CD4-positive, alpha-beta T cell (primary cell): ENCODE measurements at regions of chr3 and their contacts with region 1.

Region 1: DNA sequence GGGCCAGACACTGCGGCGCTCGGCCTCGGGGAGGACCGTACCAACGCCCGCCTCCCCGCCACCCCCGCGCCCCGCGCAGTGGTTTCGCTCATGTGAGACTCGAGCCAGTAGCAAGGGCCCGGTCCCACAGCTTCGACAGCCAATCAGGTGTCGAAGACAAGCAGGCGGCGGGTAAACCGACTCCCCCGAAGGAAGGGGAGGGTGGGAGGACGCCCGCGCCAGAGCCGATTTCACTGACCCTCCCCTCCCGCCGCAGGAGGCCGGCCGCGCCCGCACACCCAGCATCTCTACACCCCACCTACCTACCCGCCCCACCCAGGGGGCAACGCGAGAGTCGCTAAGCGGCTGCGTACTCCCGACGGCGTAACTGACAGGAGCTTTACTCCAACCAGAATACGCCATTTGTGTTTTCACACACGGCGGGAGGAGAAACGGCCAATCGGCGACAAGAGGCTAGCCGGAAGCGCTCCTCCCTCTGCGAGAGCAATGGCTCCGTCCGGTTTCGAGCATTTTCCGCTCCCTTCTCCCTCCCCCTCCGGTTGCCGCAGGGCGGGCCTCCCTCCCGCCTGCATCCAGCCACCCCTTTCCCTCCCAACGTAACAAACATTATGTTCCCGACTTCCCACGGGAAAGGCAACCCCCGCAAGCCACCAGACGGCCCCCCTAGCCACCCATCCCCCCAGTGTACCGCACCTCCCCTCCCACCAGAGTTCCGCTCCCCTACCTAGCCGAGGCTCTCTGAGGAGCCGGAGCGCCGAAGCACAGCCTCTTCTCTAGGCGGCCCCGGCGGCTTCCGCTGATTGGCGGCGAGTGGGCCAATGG is 504 bp upstream of the SETD5 start:
- DNase-seq: peak; percentile 98 to 100 (median 99)
- ATAC-seq: peak; percentile 65
- H3K4me3 ChIP-seq: peak overlapping the region; percentile 74
- H3K4me3 Mint-ChIP-seq: peak overlapping the region; percentile 95
- H3K27ac ChIP-seq: peak overlapping the region; percentile 87 to 95
- H3K27ac Mint-ChIP-seq: peak overlapping the region; percentile 99
- H3K4me1 ChIP-seq: peaks cover 30% of the 10 kb centered on the region
- H3K4me1 Mint-ChIP-seq: peaks cover 78% of the 10 kb centered on the region
- H3K27me3 ChIP-seq: no peaks in the 10 kb centered on the region
- H3K27me3 Mint-ChIP-seq: no peaks in the 10 kb centered on the region
- CTCF ChIP-seq: no peak

Region 2: GRCh38 chr3:9362731-9363530 is 34.0 kb before region 1 on chr3 and contains the start of gene THUMPD3:
- CTCF ChIA-PET with region 1: interaction called, 7 read pairs
- POLR2A ChIA-PET with region 1: interaction called, 209 read pairs
- intact Hi-C with region 1: loop called (anchors 2 kb)
- DNase-seq: peak; percentile 82 to 95 (median 86)
- ATAC-seq: peak; percentile 91
- H3K4me3 ChIP-seq: peak within 1 kb of the TSS; percentile 88
- H3K4me3 Mint-ChIP-seq: peak within 1 kb of the TSS; percentile 96
- H3K27ac ChIP-seq: peak within 1 kb of the TSS; percentile 92 to 94
- H3K27ac Mint-ChIP-seq: peak within 1 kb of the TSS; percentile 99
- H3K4me1 ChIP-seq: peaks cover 20% of the 10 kb centered on the region
- H3K4me1 Mint-ChIP-seq: peaks cover 25% of the 10 kb centered on the region
- H3K27me3 ChIP-seq: no peaks in the 10 kb centered on the region
- H3K27me3 Mint-ChIP-seq: no peaks in the 10 kb centered on the region
- CTCF ChIP-seq: peak; percentile 13
- total RNA-seq, gene THUMPD3: 74.2 to 78.0 TPM

Region 3: DNA sequence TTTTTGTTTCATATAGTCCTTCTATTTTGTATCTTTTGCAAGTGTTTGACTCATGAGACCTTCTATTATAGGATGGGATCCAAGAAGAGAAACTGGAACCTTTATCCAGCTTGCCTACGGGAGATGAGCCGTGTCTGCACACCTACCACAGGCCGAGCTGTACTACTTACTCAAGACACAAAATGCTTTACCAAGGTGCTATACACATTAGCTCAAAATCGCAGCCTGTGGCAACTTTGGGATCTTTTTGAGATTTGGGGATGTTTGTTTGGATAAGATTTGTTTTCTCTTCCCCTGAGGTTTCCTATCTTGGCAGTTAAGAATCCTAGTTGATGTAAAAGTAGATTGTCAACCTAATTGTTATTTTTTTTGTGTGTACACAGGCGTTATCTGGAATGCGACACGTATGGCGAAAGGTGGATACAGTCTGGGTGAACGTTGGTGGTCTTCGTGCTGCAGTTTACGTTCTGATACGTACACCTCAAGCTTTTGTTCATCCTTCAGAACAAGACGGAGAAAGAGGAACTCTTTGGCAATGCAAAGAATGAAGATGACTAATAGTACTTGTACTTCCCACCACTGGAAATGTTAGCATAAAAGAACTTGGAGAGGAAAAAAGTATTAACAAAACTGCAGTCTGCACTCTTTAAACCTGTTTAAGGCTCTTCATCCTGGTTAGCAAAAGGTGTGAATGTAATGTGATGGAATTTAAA is 12.6 kb before region 1 on chr3:
- CTCF ChIA-PET with region 1: interaction called, 3 read pairs
- POLR2A ChIA-PET with region 1: interaction called, 37 read pairs
- intact Hi-C with region 1: no loop called
- DNase-seq: no peak
- ATAC-seq: no peak
- H3K4me3 ChIP-seq: no peak overlapping the region
- H3K4me3 Mint-ChIP-seq: no peak overlapping the region
- H3K27ac ChIP-seq: no peak overlapping the region
- H3K27ac Mint-ChIP-seq: peak overlapping the region; percentile 64
- H3K4me1 ChIP-seq: no peaks in the 10 kb centered on the region
- H3K4me1 Mint-ChIP-seq: peaks cover 16% of the 10 kb centered on the region
- H3K27me3 ChIP-seq: no peaks in the 10 kb centered on the region
- H3K27me3 Mint-ChIP-seq: no peaks in the 10 kb centered on the region
- CTCF ChIP-seq: no peak

Region 4: DNA sequence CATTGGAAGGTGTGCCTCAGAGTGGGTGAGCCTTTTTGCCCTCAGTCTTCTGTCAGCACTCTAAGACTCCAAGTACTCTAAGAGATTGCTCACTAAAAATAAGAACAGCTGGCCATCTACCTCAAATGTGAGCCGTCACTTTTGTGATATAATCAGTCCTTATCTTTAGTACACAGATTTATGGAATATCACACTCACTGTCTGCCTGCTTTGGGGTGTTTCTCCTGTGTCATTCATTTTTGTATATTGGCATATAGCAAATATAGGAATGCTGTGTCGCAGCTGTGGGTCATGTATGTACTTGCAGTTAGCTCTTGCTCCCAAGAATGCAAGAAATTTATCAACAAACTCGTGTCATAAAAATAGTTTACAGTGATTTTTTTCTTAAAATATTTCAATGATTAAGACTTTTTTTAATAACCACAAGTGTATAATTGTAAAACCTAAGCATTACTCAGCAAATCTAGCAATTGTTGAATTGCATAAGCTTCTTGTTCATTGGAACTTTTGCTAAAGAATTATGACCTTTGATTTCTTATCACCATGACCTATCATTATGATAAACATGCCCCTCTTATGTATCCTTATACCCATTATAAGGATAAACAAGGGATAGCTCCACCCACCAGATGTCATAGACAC is 19.3 kb after region 1 on chr3:
- CTCF ChIA-PET with region 1: interaction called, 3 read pairs
- POLR2A ChIA-PET with region 1: interaction called, 36 read pairs
- intact Hi-C with region 1: loop called (anchors 2 kb)
- DNase-seq: no peak
- ATAC-seq: no peak
- H3K4me3 ChIP-seq: no peak overlapping the region
- H3K4me3 Mint-ChIP-seq: no peak overlapping the region
- H3K27ac ChIP-seq: no peak overlapping the region
- H3K27ac Mint-ChIP-seq: peak overlapping the region; percentile 29
- H3K4me1 ChIP-seq: peaks cover 20% of the 10 kb centered on the region
- H3K4me1 Mint-ChIP-seq: peaks cover 76% of the 10 kb centered on the region
- H3K27me3 ChIP-seq: no peaks in the 10 kb centered on the region
- H3K27me3 Mint-ChIP-seq: no peaks in the 10 kb centered on the region
- CTCF ChIP-seq: no peak

Region 5: DNA sequence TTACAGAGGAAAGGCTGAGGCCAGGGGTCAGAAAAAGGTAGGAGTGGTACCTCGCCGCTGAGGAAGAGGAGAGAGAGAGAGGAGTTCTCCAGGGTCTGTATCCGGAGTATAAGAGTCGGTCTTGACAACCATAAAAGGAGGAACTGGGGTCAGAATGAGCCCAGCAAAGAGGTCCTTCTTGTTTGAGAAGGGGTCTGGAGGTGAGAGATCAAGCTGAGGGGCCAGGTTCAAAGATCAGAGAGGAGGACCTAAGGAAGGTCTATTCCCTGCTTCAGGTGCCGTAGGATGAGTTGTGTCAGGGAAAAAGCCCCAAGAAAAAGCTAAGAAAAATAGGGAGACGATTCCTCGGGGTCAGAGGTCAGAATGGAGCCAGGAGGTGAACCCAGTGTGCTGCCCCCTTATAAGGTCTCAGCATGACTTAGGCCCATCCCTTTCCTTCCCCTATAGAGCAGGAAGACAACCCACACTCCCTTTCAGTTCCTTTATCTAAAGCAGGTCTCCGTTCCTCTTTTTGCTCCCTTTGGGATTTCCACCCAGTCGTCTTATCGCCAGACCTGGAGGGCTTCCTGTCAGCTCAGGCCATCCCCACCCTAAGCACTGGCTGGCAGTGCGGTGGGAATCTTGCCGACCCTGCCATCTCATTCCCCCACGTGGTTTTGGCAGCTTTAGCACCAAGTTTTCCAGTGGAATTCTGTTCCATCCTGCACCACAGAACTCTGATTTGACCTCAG is 253.0 kb after region 1 on chr3:
- CTCF ChIA-PET with region 1: no interaction called
- POLR2A ChIA-PET with region 1: interaction called, 34 read pairs
- intact Hi-C with region 1: loop called in 1 of 2 experiments (anchors 2 kb)
- DNase-seq: peak in 3 of 14 experiments; percentile 40 to 57 (median 53)
- ATAC-seq: no peak
- H3K4me3 ChIP-seq: peak overlapping the region; percentile 92
- H3K4me3 Mint-ChIP-seq: peak overlapping the region; percentile 96
- H3K27ac ChIP-seq: peak overlapping the region; percentile 78 to 92
- H3K27ac Mint-ChIP-seq: peak overlapping the region; percentile 87
- H3K4me1 ChIP-seq: peaks cover 36% of the 10 kb centered on the region
- H3K4me1 Mint-ChIP-seq: peaks cover 35% of the 10 kb centered on the region
- H3K27me3 ChIP-seq: no peaks in the 10 kb centered on the region
- H3K27me3 Mint-ChIP-seq: no peaks in the 10 kb centered on the region
- CTCF ChIP-seq: no peak

Region 6: GRCh38 chr3:9792405-9793160 is 395.7 kb after region 1 on chr3 and contains the starts of genes ARPC4 and TADA3:
- CTCF ChIA-PET with region 1: no interaction called
- POLR2A ChIA-PET with region 1: interaction called, 23 read pairs
- intact Hi-C with region 1: loop called in 1 of 2 experiments (anchors 5 kb)
- DNase-seq: peak; percentile 82 to 96 (median 88)
- ATAC-seq: peak; percentile 85
- H3K4me3 ChIP-seq: peak within 1 kb of the TSS; percentile 99
- H3K4me3 Mint-ChIP-seq: peak within 1 kb of the TSS; percentile 99
- H3K27ac ChIP-seq: peak within 1 kb of the TSS; percentile 95 to 98
- H3K27ac Mint-ChIP-seq: peak within 1 kb of the TSS; percentile 99
- H3K4me1 ChIP-seq: peaks cover 64% of the 10 kb centered on the region
- H3K4me1 Mint-ChIP-seq: peaks cover 76% of the 10 kb centered on the region
- H3K27me3 ChIP-seq: no peaks in the 10 kb centered on the region
- H3K27me3 Mint-ChIP-seq: no peaks in the 10 kb centered on the region
- CTCF ChIP-seq: no peak
- total RNA-seq, gene ARPC4: 88.7 to 91.3 TPM
- total RNA-seq, gene TADA3: 14.7 to 16.5 TPM